CD4-positive, alpha-beta T cell (primary cell): ENCODE measurements at regions of chr14 and their contacts with region 1.

Region 1: DNA sequence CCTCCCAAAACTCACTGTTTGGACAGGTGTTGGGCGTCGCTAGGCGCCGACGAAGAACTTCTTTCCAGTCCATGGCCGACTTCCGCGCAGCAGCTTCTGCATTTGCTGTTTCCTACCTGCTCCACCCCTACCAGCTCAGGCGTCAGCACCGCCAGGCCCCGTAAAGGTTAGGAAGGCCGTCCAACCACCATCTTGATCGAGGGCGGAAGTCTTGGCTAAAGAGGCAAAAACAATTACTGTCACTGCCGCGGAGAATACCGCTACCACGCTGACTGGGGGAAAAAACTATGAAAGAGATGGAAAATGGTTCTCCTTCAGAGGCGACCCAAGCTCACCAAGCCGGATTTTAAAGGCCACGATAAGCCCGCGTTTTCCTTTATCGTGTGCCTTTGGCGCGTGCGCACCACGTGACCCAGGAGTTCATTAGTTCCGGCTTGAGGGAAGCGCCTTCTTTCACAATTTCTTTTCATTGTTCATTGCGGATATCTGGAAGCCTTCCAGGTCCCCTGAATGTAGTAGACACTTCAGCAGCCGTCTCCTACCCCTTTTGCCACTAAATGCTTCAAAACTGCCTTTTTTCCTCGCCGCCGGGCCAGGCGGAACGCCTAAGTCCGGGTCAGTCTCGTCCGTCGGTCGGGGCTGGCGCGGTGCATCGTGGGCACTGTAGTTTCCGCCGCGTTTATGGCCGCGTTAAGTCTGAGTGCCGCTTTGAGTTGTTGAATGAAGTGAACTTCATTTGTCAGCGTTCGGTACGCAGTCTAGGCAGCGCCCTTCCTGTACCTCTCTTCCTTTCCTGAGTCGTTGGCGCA is at the starts of genes PPP2R3C and PRORP:
- DNase-seq: peak; percentile 82 to 98 (median 87)
- ATAC-seq: peak; percentile 81
- H3K4me3 ChIP-seq: peak within 1 kb of the TSS; percentile 75
- H3K4me3 Mint-ChIP-seq: peak within 1 kb of the TSS; percentile 100
- H3K27ac ChIP-seq: peak within 1 kb of the TSS; percentile 99
- H3K27ac Mint-ChIP-seq: peak within 1 kb of the TSS; percentile 99
- H3K4me1 ChIP-seq: peaks cover 56% of the 10 kb centered on the region
- H3K4me1 Mint-ChIP-seq: peaks cover 79% of the 10 kb centered on the region
- H3K27me3 ChIP-seq: no peaks in the 10 kb centered on the region
- H3K27me3 Mint-ChIP-seq: no peaks in the 10 kb centered on the region
- CTCF ChIP-seq: no peak
- total RNA-seq, gene PPP2R3C: 34.9 to 37.6 TPM
- total RNA-seq, gene PRORP: 27.0 to 32.0 TPM

Region 2: GRCh38 chr14:34461334-34462131 is 660.6 kb before region 1 on chr14:
- CTCF ChIA-PET with region 1: no interaction called
- POLR2A ChIA-PET with region 1: no interaction called
- intact Hi-C with region 1: loop called in 1 of 2 experiments (anchors 10 kb)
- DNase-seq: peak in 6 of 14 experiments; percentile 4 to 48 (median 20)
- ATAC-seq: no peak
- H3K4me3 ChIP-seq: peak overlapping the region; percentile 78
- H3K4me3 Mint-ChIP-seq: peak overlapping the region; percentile 87
- H3K27ac ChIP-seq: no peak overlapping the region
- H3K27ac Mint-ChIP-seq: peak overlapping the region; percentile 50
- H3K4me1 ChIP-seq: peaks cover 12% of the 10 kb centered on the region
- H3K4me1 Mint-ChIP-seq: peaks cover 15% of the 10 kb centered on the region
- H3K27me3 ChIP-seq: no peaks in the 10 kb centered on the region
- H3K27me3 Mint-ChIP-seq: no peaks in the 10 kb centered on the region
- CTCF ChIP-seq: no peak

Region 3: DNA sequence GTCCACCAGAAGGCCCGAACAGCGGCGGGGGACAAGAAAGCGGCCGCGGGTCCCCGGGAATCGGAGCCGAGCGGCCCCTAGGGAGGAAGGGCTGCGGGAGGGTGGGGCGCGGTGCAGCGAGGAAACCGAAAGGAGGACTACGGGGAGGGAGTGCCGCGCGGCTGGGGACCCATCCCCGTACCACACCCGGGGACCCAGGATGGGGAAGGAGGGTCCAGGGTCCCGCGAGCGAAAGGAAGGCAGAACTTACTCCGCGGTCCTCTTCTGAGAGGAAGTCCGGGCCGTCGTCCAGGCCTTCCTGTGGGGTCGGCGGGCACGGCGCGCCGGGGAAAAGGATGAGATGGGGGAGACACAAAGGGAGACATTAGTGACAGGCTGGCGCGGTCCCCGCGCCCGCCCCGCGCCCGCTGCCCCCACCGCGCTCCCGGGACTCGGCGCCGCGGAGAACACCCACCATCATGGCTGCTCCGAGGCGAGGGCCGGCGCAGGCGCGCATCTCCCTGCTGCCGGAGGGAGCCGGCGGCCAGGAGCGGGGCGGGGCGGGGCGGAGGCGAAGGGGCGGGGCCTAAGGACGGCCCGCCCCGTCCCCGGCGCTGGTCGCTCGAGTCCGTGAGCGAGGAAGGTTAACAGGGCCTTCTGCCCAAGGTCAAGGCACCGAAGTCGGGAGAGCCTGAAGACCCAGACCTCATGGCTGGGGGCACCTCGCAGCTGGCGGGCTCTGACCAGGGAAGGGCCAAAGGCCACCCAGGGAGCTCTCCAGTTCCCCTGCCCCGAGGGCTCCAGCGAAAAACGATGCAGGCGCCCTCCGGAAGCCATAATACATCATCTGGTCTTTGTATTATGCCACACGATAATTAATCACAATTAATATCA is 492.2 kb before region 1 on chr14 and contains the start of gene SNX6:
- CTCF ChIA-PET with region 1: no interaction called
- POLR2A ChIA-PET with region 1: no interaction called
- intact Hi-C with region 1: loop called in 1 of 2 experiments (anchors 2 kb)
- DNase-seq: peak; percentile 73 to 94 (median 81)
- ATAC-seq: peak; percentile 96
- H3K4me3 ChIP-seq: peak within 1 kb of the TSS; percentile 96
- H3K4me3 Mint-ChIP-seq: peak within 1 kb of the TSS; percentile 95
- H3K27ac ChIP-seq: peak within 1 kb of the TSS; percentile 86 to 89
- H3K27ac Mint-ChIP-seq: peak within 1 kb of the TSS; percentile 88
- H3K4me1 ChIP-seq: peaks cover 39% of the 10 kb centered on the region
- H3K4me1 Mint-ChIP-seq: peaks cover 27% of the 10 kb centered on the region
- H3K27me3 ChIP-seq: no peaks in the 10 kb centered on the region
- H3K27me3 Mint-ChIP-seq: no peaks in the 10 kb centered on the region
- CTCF ChIP-seq: no peak
- total RNA-seq, gene SNX6: 51.5 to 55.8 TPM

Region 4: DNA sequence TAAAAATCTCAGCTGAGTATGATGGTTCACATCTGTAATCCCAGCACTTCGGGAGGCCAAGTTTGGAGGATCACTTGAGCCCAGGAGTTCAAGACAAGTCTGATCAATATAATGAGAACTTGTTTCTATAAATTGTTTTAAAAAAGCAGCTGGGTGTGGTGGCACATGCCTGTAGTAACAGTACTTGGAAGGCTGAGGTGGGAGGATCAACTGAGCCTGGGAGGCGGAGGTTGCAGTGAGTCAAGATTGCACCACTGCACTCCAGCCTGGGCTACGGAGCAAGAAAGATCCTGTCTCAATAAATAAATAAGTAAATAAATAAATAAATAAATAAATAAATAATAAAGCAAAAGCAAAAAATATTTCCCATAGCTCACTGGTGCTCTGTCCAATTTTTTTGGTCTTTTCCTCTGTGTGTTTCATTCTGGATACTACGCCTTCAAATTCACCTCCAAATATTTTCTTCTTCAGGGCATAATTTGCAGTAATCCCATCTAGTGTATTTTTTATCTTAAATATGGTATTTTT is 459.5 kb before region 1 on chr14:
- CTCF ChIA-PET with region 1: no interaction called
- POLR2A ChIA-PET with region 1: no interaction called
- intact Hi-C with region 1: no loop called
- DNase-seq: no peak
- ATAC-seq: no peak
- H3K4me3 ChIP-seq: no peak overlapping the region
- H3K4me3 Mint-ChIP-seq: no peak overlapping the region
- H3K27ac ChIP-seq: no peak overlapping the region
- H3K27ac Mint-ChIP-seq: no peak overlapping the region
- H3K4me1 ChIP-seq: peaks cover 13% of the 10 kb centered on the region
- H3K4me1 Mint-ChIP-seq: peaks cover 13% of the 10 kb centered on the region
- H3K27me3 ChIP-seq: no peaks in the 10 kb centered on the region
- H3K27me3 Mint-ChIP-seq: no peaks in the 10 kb centered on the region
- CTCF ChIP-seq: no peak

Region 5: DNA sequence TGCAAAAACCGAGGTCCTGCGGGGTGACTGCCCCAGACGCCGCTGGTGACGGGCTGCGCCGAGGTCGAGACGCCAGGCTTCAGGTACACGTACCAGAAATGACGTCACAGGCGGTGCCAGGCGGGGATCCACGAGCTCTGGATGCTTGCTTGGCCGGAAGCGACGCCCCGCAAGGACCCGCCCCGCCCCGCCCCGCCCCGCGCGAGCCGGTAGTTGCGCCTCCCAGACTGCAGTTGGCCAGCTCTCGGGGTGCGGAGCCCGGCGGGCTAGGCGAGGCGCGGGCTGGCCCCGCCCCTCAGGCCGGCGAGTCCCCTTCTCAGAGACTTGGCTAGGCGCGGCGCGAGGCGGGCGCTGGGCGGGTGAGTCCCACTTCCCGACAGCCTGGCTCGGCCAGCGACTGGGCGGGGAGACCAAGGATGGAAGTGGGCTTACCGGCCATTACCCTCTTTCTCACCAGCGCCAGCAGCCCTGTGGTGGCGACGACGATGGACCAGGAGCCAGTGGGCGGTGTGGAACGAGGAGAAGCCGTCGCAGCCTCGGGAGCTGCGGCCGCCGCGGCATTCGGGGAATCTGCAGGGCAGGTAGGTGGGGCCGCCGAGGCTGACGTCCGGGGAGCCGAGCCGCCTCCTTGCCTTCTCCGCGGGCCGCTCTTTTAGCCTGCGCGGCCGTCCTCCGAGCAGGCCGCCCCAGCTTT is 75.9 kb before region 1 on chr14 and contains the start of gene FAM177A1:
- CTCF ChIA-PET with region 1: interaction called, 7 read pairs
- POLR2A ChIA-PET with region 1: interaction called, 54 read pairs
- intact Hi-C with region 1: loop called (anchors 1 kb)
- DNase-seq: peak; percentile 94 to 100 (median 98)
- ATAC-seq: peak; percentile 83
- H3K4me3 ChIP-seq: peak within 1 kb of the TSS; percentile 68
- H3K4me3 Mint-ChIP-seq: peak within 1 kb of the TSS; percentile 91
- H3K27ac ChIP-seq: peak within 1 kb of the TSS; percentile 96 to 97
- H3K27ac Mint-ChIP-seq: peak within 1 kb of the TSS; percentile 94
- H3K4me1 ChIP-seq: peaks cover 11% of the 10 kb centered on the region
- H3K4me1 Mint-ChIP-seq: peaks cover 36% of the 10 kb centered on the region
- H3K27me3 ChIP-seq: no peaks in the 10 kb centered on the region
- H3K27me3 Mint-ChIP-seq: no peaks in the 10 kb centered on the region
- CTCF ChIP-seq: no peak
- total RNA-seq, gene FAM177A1: 172 to 186 TPM

Region 6: GRCh38 chr14:35416108-35416750 is 294.1 kb after region 1 on chr14:
- CTCF ChIA-PET with region 1: no interaction called
- POLR2A ChIA-PET with region 1: interaction called, 25 read pairs
- intact Hi-C with region 1: no loop called
- DNase-seq: peak in 10 of 14 experiments; percentile 18 to 92 (median 50)
- ATAC-seq: peak; percentile 49
- H3K4me3 ChIP-seq: no peak overlapping the region
- H3K4me3 Mint-ChIP-seq: no peak overlapping the region
- H3K27ac ChIP-seq: peak overlapping the region; percentile 47 to 54
- H3K27ac Mint-ChIP-seq: peak overlapping the region; percentile 70
- H3K4me1 ChIP-seq: peaks cover 44% of the 10 kb centered on the region
- H3K4me1 Mint-ChIP-seq: peaks cover 43% of the 10 kb centered on the region
- H3K27me3 ChIP-seq: no peaks in the 10 kb centered on the region
- H3K27me3 Mint-ChIP-seq: no peaks in the 10 kb centered on the region
- CTCF ChIP-seq: no peak

Region 7: GRCh38 chr14:35826218-35826951 is 704.3 kb after region 1 on chr14 and contains the start of gene BRMS1L:
- CTCF ChIA-PET with region 1: no interaction called
- POLR2A ChIA-PET with region 1: interaction called, 7 read pairs
- intact Hi-C with region 1: loop called in 1 of 2 experiments (anchors 5 kb)
- DNase-seq: peak; percentile 90 to 98 (median 95)
- ATAC-seq: peak; percentile 98
- H3K4me3 ChIP-seq: peak within 1 kb of the TSS; percentile 99
- H3K4me3 Mint-ChIP-seq: peak within 1 kb of the TSS; percentile 88
- H3K27ac ChIP-seq: peak within 1 kb of the TSS; percentile 72 to 89
- H3K27ac Mint-ChIP-seq: peak within 1 kb of the TSS; percentile 68
- H3K4me1 ChIP-seq: peaks cover 15% of the 10 kb centered on the region
- H3K4me1 Mint-ChIP-seq: peaks cover 31% of the 10 kb centered on the region
- H3K27me3 ChIP-seq: no peaks in the 10 kb centered on the region
- H3K27me3 Mint-ChIP-seq: no peaks in the 10 kb centered on the region
- CTCF ChIP-seq: no peak
- total RNA-seq, gene BRMS1L: 6.1 to 9.2 TPM